Natural killer cell (primary cell): ENCODE measurements at regions of chr5 and their contacts with region 1.

Region 1: DNA sequence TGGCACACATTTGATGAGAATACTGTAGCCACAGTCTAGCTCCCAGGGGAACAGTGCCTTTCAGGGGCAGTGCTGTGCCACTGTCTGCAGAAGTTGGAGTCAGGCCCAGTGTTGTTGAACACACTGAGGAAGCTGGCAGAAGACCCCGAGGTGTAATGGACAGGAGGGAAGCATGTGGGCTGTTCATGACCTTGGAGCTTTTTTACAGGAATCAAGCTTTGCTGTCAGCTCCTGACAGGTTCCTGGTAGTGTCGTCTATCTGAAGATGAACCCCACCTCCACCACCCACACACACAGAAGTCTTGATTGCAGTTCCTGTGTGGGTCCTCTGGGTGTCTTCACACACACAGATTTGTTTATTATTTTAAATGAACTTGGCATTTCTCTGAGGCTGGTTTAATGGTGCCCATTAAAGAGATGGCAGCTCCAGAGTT is 40.3 kb upstream of the TNFAIP8 start:
- DNase-seq: peak in 1 of 2 donors; percentile 84
- ATAC-seq: peak; percentile 84 to 92 (median 87)
- H3K4me3 ChIP-seq: no peak overlapping the region
- H3K4me3 Mint-ChIP-seq: peak overlapping the region; percentile 13
- H3K27ac ChIP-seq: peak overlapping the region; percentile 46
- H3K27ac Mint-ChIP-seq: peak overlapping the region; percentile 76 to 89
- H3K4me1 ChIP-seq: peaks cover 60% of the 10 kb centered on the region
- H3K4me1 Mint-ChIP-seq: peaks cover 72% of the 10 kb centered on the region in 2 donors
- H3K27me3 ChIP-seq: no peaks in the 10 kb centered on the region
- H3K27me3 Mint-ChIP-seq: no peaks in the 10 kb centered on the region
- CTCF ChIP-seq: peak; percentile 61

Region 2: DNA sequence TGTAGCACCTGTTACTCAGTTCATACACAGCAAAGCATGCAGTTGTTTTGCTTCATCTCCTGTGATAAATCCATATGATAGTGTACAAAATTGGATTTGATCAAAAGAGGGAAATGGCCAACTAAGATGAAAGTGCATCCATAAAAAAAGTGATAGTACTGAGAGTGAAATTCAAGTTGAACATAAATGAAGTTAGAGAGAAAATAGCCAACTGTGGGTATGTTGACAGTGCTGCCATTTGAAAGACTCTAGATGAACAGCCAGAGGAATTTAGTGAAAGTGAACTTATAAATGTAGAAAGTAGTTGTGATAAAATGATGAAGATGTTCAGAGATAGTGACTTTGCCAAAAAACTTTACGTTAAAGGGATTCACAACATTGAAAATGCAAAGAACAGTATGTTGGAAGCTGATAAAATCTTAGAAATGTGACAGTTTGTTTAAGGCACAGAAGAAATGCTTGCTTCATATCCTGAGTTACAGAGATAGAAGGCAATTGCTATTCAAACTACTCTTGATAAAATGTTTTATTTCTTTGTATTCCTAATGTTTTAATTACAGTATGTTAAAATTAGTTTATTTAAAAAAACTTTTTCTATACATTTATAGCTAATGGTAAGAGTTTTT is 125.0 kb before region 1 on chr5:
- intact Hi-C with region 1: no loop called
- DNase-seq: no peak
- ATAC-seq: no peak
- H3K4me3 ChIP-seq: no peak overlapping the region
- H3K4me3 Mint-ChIP-seq: no peak overlapping the region
- H3K27ac ChIP-seq: no peak overlapping the region
- H3K27ac Mint-ChIP-seq: peak overlapping the region in 1 of 2 donors; percentile 12
- H3K4me1 ChIP-seq: peaks cover 10% of the 10 kb centered on the region
- H3K4me1 Mint-ChIP-seq: peaks cover 14 to 23% of the 10 kb centered on the region in 2 donors
- H3K27me3 ChIP-seq: no peaks in the 10 kb centered on the region
- H3K27me3 Mint-ChIP-seq: no peaks in the 10 kb centered on the region
- CTCF ChIP-seq: no peak

Region 3: GRCh38 chr5:119355685-119356611 is 40.4 kb after region 1 on chr5 and contains the start of gene TNFAIP8:
- intact Hi-C with region 1: loop called (anchors 5 kb)
- DNase-seq: peak; percentile 37 to 74
- ATAC-seq: peak; percentile 63 to 82 (median 81)
- H3K4me3 ChIP-seq: peak within 1 kb of the TSS; percentile 50
- H3K4me3 Mint-ChIP-seq: peak within 1 kb of the TSS; percentile 80
- H3K27ac ChIP-seq: peak within 1 kb of the TSS; percentile 64
- H3K27ac Mint-ChIP-seq: peak within 1 kb of the TSS; percentile 55 to 79
- H3K4me1 ChIP-seq: peaks cover 36% of the 10 kb centered on the region
- H3K4me1 Mint-ChIP-seq: peaks cover 87 to 89% of the 10 kb centered on the region in 2 donors
- H3K27me3 ChIP-seq: no peaks in the 10 kb centered on the region
- H3K27me3 Mint-ChIP-seq: no peaks in the 10 kb centered on the region
- CTCF ChIP-seq: no peak
- total RNA-seq, gene TNFAIP8: 47.6 to 87.5 (median 76.3) TPM

Region 4: GRCh38 chr5:119411935-119412602 is 96.5 kb after region 1 on chr5:
- intact Hi-C with region 1: loop called (anchors 1 kb)
- DNase-seq: peak; percentile 21 to 88
- ATAC-seq: peak; percentile 84 to 98 (median 96)
- H3K4me3 ChIP-seq: peak overlapping the region; percentile 38
- H3K4me3 Mint-ChIP-seq: peak overlapping the region; percentile 94
- H3K27ac ChIP-seq: no peak overlapping the region
- H3K27ac Mint-ChIP-seq: peak overlapping the region in 1 of 2 donors; percentile 85
- H3K4me1 ChIP-seq: peaks cover 8% of the 10 kb centered on the region
- H3K4me1 Mint-ChIP-seq: peaks cover 9 to 10% of the 10 kb centered on the region in 2 donors
- H3K27me3 ChIP-seq: no peaks in the 10 kb centered on the region
- H3K27me3 Mint-ChIP-seq: peaks cover 0 to 4% of the 10 kb centered on the region in 2 donors
- CTCF ChIP-seq: peak; percentile 94